ENCODE measurements at regions of chr9 and their contacts with region 1.

Region 1: GRCh38 chr9:116572095-116572748 is 114.9 kb upstream of the TRIM32 start:
- DNase-seq: peak; percentile 94
- ATAC-seq: peak; percentile 97

Region 2: DNA sequence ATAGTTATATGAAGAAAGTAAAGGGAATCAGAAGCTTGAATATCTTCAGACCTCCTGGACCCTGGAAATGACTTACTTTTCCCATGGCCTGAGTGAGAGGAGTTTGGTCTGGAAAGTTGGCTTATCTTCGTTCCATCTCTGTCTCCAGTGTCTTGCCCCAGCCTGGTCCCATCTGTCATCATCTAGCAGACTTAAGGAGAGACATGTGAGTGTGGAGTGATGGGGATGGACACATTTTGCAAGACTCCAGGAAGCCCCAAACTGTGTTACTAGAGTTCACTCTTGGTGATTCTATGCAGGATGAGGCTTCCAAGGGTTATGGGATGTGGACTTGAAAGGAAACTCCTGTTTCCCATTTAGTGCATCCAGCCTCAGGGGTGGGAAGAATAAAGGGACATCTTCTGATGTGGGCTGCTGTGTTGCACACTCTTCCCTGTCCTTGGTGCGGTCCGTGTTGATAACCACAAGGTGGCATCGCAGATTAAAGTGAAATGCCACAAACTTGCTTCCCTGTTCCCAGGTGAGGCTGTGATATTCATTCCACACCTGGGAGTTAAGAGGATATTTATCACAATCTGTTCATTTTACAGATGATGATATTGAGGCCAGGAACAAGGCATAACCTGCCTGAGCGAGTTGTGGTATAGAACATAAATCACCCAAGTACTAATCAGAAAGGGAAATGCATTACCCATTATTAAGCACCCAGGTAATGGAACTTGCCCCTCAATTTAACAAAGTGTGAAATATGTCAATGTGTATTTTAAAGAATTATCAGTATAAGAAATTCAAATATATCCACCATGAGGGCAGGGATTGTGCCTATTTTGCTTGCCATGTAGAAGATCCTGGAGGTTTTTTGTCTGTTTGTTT is 688.5 kb before region 1 on chr9:
- intact Hi-C with region 1: loop called (anchors 5 kb)
- DNase-seq: no peak
- ATAC-seq: peak; percentile 71

Region 3: GRCh38 chr9:116219686-116220085 is 352.5 kb before region 1 on chr9:
- intact Hi-C with region 1: loop called (anchors 10 kb)
- DNase-seq: no peak
- ATAC-seq: peak; percentile 56

Region 4: GRCh38 chr9:116494815-116495634 is 77.2 kb before region 1 on chr9:
- intact Hi-C with region 1: loop called (anchors 1 kb)
- DNase-seq: no peak
- ATAC-seq: peak; percentile 45